ENCODE measurements at regions of chr12 and their contacts with region 1.

Region 1: GRCh38 chr12:8045952-8046944 is 13.7 kb downstream of the FOXJ2 start:
- DNase-seq: no peak
- ATAC-seq: peak; percentile 89
- H3K4me3 ChIP-seq: no peak overlapping the region
- H3K27ac ChIP-seq: no peak overlapping the region
- H3K4me1 ChIP-seq: no peaks in the 10 kb centered on the region
- H3K27me3 ChIP-seq: no peaks in the 10 kb centered on the region
- CTCF ChIP-seq: peak; percentile 85 to 89 (median 86)
- EP300 ChIP-seq: no peak
- POLR2A ChIP-seq: no peak
- RAD21 ChIP-seq: peak; percentile 66

Region 2: GRCh38 chr12:7512553-7512952 is 533.7 kb before region 1 on chr12:
- CTCF ChIA-PET with region 1: no interaction called
- POLR2A ChIA-PET with region 1: no interaction called
- RAD21 ChIA-PET with region 1: no interaction called
- SMC1A ChIA-PET with region 1: no interaction called
- in situ Hi-C with region 1: no loop called
- intact Hi-C with region 1: no loop called
- DNase-seq: no peak
- ATAC-seq: no peak
- H3K4me3 ChIP-seq: no peak overlapping the region
- H3K27ac ChIP-seq: no peak overlapping the region
- H3K4me1 ChIP-seq: no peaks in the 10 kb centered on the region
- H3K27me3 ChIP-seq: no peaks in the 10 kb centered on the region
- CTCF ChIP-seq: no peak
- EP300 ChIP-seq: no peak
- POLR2A ChIP-seq: no peak
- RAD21 ChIP-seq: no peak

Region 3: DNA sequence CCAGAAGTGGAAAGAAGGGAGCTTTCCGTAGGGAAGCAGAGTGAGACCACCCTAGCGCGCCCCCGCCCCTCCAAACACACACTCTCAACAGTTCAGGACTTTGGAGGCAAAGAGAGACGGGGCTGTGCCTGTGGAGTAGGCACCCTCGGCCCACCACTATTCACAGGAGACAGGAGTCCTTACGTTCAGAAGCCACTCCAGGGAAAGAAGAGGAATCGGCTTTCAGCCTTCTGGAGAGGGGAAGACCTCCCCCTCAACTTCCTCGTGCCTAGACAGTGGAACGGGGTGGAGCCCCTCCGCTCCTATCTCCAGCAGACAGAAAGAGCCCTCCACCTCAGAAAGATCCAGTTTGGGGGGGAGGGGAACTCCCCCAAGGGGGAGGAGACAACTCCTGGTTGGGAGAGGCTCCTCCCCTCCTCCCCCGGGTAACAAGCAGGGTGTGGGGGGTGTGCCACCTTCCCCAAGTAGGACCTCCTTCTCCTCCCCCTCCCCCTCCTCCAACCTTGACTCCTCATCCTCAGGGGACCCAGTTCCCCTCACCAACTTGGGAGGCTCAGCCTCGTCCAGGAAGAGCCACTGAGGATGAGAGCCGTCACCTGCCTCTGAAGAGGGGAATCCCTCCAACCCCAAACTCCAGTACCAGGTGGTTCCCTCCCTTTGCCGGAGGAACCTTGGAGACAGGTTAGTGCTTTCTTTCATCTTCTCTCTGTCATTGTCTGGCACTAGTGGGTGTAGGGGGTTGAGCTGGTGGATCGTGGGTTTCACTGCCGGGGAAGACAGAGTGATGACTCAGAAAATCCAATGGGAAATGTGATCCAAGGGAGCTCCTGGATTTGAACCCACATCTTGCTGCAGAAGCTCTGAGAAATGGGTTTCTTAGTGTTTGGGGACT is 12.8 kb before region 1 on chr12:
- CTCF ChIA-PET with region 1: interaction called, 10 read pairs
- POLR2A ChIA-PET with region 1: interaction called, 3 read pairs
- RAD21 ChIA-PET with region 1: interaction called, 3 read pairs
- SMC1A ChIA-PET with region 1: interaction called, 4 read pairs
- in situ Hi-C with region 1: no loop called
- intact Hi-C with region 1: no loop called
- DNase-seq: no peak
- ATAC-seq: peak; percentile 49
- H3K4me3 ChIP-seq: peak overlapping the region; percentile 88
- H3K27ac ChIP-seq: peak overlapping the region; percentile 71
- H3K4me1 ChIP-seq: peaks cover 16% of the 10 kb centered on the region
- H3K27me3 ChIP-seq: no peaks in the 10 kb centered on the region
- CTCF ChIP-seq: no peak
- EP300 ChIP-seq: 0 out of 4 replicates have a peak, but pooled peaks of 1 of the 2 experiments have one; percentile 17
- POLR2A ChIP-seq: no peak
- RAD21 ChIP-seq: no peak

Region 4: GRCh38 chr12:8057839-8058238 is 11.6 kb after region 1 on chr12:
- CTCF ChIA-PET with region 1: interaction called, 12 read pairs
- POLR2A ChIA-PET with region 1: no interaction called
- RAD21 ChIA-PET with region 1: no interaction called
- SMC1A ChIA-PET with region 1: no interaction called
- in situ Hi-C with region 1: no loop called
- intact Hi-C with region 1: no loop called
- DNase-seq: no peak
- ATAC-seq: no peak
- H3K4me3 ChIP-seq: no peak overlapping the region
- H3K27ac ChIP-seq: no peak overlapping the region
- H3K4me1 ChIP-seq: no peaks in the 10 kb centered on the region
- H3K27me3 ChIP-seq: no peaks in the 10 kb centered on the region
- CTCF ChIP-seq: no peak
- EP300 ChIP-seq: no peak
- POLR2A ChIP-seq: no peak
- RAD21 ChIP-seq: no peak